Transverse colon (tissue), 4 donors: ENCODE measurements at regions of chr7 and their contacts with region 1.

Region 1: DNA sequence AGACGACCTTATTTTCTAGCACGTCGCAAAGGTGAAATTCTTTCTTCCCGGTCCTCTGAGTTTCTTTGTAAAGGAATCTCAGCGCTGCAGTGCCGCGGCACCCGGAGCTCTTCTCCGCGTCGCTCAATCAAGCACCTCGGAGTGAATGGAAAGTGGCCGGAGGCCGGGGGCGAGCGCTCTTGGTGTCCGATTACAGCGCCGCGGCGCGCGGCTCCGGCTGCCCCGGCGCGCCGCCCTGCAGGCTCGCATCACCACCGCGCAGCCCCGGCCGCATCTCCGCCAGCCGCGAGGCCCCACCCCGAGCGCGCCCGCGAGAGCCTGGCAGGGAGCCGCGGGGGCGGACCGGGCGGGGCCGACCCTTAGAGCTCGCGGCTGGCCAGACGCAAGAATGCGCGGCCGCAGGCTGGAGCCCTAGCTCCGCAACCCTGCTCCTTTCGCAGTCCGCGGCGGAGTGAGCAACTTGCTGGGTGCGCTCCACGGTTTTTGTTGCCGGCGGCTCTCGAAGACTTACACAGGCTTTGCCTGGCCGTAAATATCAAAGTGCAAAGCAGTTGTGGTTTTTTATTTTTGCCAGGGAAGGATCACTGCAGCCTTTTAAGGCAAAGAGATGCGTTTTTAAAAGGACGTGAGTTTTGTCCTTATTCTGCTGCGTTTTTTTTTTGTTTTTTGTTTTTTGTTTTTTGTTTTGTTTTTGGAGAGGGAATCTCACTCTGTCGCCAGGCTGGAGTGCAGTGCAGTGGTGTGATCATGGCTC is at the start of gene SEMA3C:
- DNase-seq: peak; percentile 90
- H3K4me3 ChIP-seq: peak within 1 kb of the TSS; percentile 45 to 75 (median 67)
- H3K27ac ChIP-seq: peak within 1 kb of the TSS; percentile 85 to 90 (median 89)
- H3K4me1 ChIP-seq: peaks cover 5 to 58% (median 24%) of the 10 kb centered on the region in 4 donors
- H3K27me3 ChIP-seq: no peaks in the 10 kb centered on the region
- CTCF ChIP-seq: peak in 1 of 5 experiments; percentile 13
- EP300 ChIP-seq: no peak
- POLR2A ChIP-seq: peak; percentile 86
- total RNA-seq, gene SEMA3C: 34.0 to 83.8 (median 79.9) TPM

Region 2: GRCh38 chr7:80722616-80723141 is 196.4 kb before region 1 on chr7:
- in situ Hi-C with region 1: loop called in 3 of 4 experiments (anchors 25 kb)
- intact Hi-C with region 1: no loop called
- DNase-seq: peak; percentile 37
- H3K4me3 ChIP-seq: no peak overlapping the region
- H3K27ac ChIP-seq: peak overlapping the region; percentile 32 to 78 (median 66)
- H3K4me1 ChIP-seq: peaks cover 0 to 15% (median 5%) of the 10 kb centered on the region in 4 donors
- H3K27me3 ChIP-seq: no peaks in the 10 kb centered on the region
- CTCF ChIP-seq: no peak
- EP300 ChIP-seq: no peak
- POLR2A ChIP-seq: no peak

Region 3: GRCh38 chr7:80997841-80998240 is 78.8 kb after region 1 on chr7:
- in situ Hi-C with region 1: no loop called
- intact Hi-C with region 1: no loop called
- DNase-seq: no peak
- H3K4me3 ChIP-seq: no peak overlapping the region
- H3K27ac ChIP-seq: no peak overlapping the region
- H3K4me1 ChIP-seq: no peaks in the 10 kb centered on the region
- H3K27me3 ChIP-seq: no peaks in the 10 kb centered on the region
- CTCF ChIP-seq: no peak
- EP300 ChIP-seq: no peak
- POLR2A ChIP-seq: no peak

Region 4: GRCh38 chr7:81469869-81470723 is 551.0 kb after region 1 on chr7:
- in situ Hi-C with region 1: loop called (anchors 25 kb)
- intact Hi-C with region 1: no loop called
- DNase-seq: peak; percentile 82
- H3K4me3 ChIP-seq: no peak overlapping the region
- H3K27ac ChIP-seq: peak overlapping the region in 3 of 4 donors; percentile 66 to 75 (median 69)
- H3K4me1 ChIP-seq: peaks cover 0 to 24% (median 15%) of the 10 kb centered on the region in 4 donors
- H3K27me3 ChIP-seq: no peaks in the 10 kb centered on the region
- CTCF ChIP-seq: peak; percentile 54 to 73 (median 60)
- EP300 ChIP-seq: no peak
- POLR2A ChIP-seq: no peak